PC-3 (cell line): ENCODE measurements at regions of chr12 and their contacts with region 1.

Region 1: GRCh38 chr12:64412459-64412858 is 8.3 kb downstream of the XPOT start:
- DNase-seq: no peak
- ATAC-seq: no peak
- H3K4me3 ChIP-seq: no peak overlapping the region
- H3K27ac ChIP-seq: no peak overlapping the region
- H3K4me1 ChIP-seq: 0 out of 2 replicates have a peak, but pooled peaks cover 4% of the 10 kb centered on the region
- H3K27me3 ChIP-seq: no peaks in the 10 kb centered on the region
- CTCF ChIP-seq: no peak

Region 2: DNA sequence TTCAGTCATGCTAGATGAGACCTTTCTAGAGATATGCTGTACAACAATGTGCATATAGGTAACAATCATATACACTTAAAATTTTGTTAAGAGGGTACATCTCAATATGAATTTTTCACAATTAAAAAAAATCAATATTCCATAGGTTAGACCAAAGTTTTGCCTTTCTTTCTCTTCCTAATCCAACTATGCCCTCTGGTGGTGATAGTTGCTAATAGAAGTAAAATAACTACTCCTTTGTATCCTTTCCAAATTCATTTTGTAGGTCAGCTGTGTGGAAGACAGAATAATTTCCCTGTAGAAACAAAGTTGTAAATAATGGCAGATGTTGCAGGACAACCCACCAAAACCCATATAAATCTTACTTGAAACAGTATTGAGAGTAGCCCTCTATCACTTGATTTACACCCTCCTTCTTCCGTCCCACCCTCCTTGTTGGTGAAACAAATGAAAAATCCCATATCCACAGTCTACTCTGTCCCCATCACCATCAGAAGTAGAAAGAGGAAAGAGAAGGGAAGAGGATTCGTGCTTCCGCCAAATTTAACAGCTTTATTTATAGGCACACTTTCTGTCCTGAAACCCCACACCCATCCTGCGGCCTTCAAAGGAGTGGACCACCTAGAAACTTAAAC is 156.2 kb before region 1 on chr12:
- CTCF ChIA-PET with region 1: no interaction called
- POLR2A ChIA-PET with region 1: no interaction called
- intact Hi-C with region 1: no loop called
- DNase-seq: peak; percentile 85
- ATAC-seq: peak; percentile 38
- H3K4me3 ChIP-seq: no peak overlapping the region
- H3K27ac ChIP-seq: no peak overlapping the region
- H3K4me1 ChIP-seq: no peaks in the 10 kb centered on the region
- H3K27me3 ChIP-seq: no peaks in the 10 kb centered on the region
- CTCF ChIP-seq: peak; percentile 89

Region 3: GRCh38 chr12:64427988-64428387 is 15.5 kb after region 1 on chr12:
- CTCF ChIA-PET with region 1: no interaction called
- POLR2A ChIA-PET with region 1: no interaction called
- intact Hi-C with region 1: loop called (anchors 1 kb)
- DNase-seq: no peak
- ATAC-seq: no peak
- H3K4me3 ChIP-seq: no peak overlapping the region
- H3K27ac ChIP-seq: no peak overlapping the region
- H3K4me1 ChIP-seq: no peaks in the 10 kb centered on the region
- H3K27me3 ChIP-seq: no peaks in the 10 kb centered on the region
- CTCF ChIP-seq: no peak

Region 4: DNA sequence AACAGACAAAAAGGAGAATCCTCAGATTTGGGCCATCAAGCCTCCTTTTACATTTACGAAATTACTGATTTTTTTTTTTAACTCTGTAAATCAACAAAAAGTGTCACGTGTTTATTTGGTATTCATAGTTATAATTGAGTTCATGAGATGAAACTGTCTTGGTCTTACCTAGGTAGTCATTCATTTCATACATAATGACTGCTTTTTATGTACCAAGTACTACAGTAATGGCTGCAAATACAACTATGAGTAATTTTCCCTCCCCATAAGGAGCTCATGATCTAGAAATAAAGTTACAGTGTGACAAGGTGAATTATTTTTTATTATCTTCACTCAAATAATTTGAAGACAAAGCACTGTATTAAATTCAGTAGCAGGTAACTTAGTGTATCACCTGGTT is 33.0 kb after region 1 on chr12:
- CTCF ChIA-PET with region 1: no interaction called
- POLR2A ChIA-PET with region 1: no interaction called
- intact Hi-C with region 1: loop called (anchors 5 kb)
- DNase-seq: no peak
- ATAC-seq: no peak
- H3K4me3 ChIP-seq: no peak overlapping the region
- H3K27ac ChIP-seq: no peak overlapping the region
- H3K4me1 ChIP-seq: peaks cover 6% of the 10 kb centered on the region
- H3K27me3 ChIP-seq: no peaks in the 10 kb centered on the region
- CTCF ChIP-seq: no peak

Region 5: DNA sequence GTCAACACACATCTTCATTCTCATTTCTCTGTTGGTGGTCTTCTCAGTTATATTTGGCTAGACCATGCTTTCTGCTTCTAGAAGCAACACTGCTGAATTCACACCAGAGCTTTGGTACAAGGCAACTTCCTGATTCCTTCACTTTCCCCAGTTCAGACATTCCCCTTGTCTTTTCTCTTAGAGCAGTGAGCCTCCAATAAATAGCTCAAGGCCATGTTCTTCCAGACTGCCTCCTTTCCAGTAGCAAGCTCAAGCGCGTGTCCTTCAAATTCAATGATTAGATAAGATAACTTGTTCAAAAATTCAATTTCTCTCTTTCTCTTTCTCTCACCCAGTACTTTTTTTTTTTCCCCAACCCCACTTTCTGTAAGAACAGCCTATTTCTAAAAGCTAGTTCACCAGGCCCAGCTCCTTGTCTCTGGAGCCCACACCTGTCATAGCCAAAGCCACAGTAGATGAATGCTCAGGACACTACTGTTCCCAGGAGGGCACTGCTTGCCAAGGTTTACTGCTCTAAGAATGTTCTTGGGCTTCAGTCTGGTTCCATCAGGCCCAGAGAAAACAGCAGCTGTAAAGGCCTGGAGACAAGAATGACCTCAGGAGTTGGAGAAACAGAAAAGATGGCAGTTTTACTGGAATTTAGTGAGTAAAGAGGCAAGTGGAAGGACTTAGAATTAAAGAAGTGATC is 57.1 kb after region 1 on chr12:
- CTCF ChIA-PET with region 1: no interaction called
- POLR2A ChIA-PET with region 1: no interaction called
- intact Hi-C with region 1: no loop called
- DNase-seq: no peak
- ATAC-seq: no peak
- H3K4me3 ChIP-seq: no peak overlapping the region
- H3K27ac ChIP-seq: no peak overlapping the region
- H3K4me1 ChIP-seq: no peaks in the 10 kb centered on the region
- H3K27me3 ChIP-seq: no peaks in the 10 kb centered on the region
- CTCF ChIP-seq: no peak